Right ventricle myocardium inferior (tissue), 1 donor: ENCODE measurements at regions of chr7 and their contacts with region 1.

Region 1: GRCh38 chr7:31744294-31744874 is 57.4 kb downstream of the PPP1R17 start:
- DNase-seq: peak; percentile 74
- ATAC-seq: peak; percentile 64

Region 2: DNA sequence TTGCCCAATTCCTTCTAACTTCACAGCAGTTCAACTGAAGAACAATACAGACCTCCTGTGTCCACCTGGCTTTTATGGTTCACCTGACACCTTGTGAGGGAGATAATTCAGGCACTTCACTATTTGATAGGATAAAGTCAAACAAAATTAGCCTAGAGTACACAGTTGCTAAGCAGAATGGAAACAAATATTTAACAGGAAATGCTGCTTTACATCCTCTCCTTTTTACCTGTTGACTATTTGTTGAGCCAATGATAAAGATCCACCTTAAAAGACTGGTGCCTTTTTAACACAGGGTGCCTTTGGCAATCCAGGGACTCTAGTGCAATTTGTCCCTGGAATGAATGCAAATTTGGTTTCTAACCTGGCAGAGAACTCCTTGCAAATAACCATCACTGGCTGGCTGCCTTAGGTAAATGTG is 190.7 kb before region 1 on chr7:
- intact Hi-C with region 1: no loop called
- DNase-seq: no peak
- ATAC-seq: no peak

Region 3: GRCh38 chr7:31595390-31595789 is 149.0 kb before region 1 on chr7:
- intact Hi-C with region 1: no loop called
- DNase-seq: no peak
- ATAC-seq: no peak

Region 4: DNA sequence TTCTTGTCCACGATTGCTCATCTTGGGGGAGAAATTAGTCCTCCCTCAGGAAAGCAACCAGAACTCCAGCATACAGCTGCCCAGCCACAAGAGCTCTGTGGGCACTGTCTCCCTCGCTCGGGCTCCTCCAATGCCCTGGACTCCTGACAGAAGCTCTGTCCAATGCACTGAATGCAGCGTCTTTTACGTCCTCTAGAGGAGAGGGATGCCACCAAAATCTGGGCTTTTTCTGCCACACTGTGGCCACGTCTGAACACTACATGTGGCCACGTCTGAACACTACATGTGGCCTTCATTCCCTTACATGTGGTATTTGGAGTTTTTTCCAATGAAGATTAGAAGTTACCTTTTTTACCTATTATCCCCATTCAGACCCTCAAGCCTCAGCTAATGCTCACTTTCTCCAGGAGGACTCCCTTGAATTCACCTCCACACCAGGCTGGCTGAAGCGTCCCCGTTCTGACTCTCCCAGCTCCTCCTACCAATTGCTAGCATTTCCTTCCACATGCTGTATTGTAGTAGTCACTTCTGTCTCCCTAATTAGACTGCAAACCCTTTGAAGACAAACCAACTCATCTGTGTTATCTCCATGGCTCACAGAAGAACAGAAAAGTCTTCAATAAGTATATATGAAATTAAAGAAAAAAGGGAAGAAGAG is 460.1 kb after region 1 on chr7:
- intact Hi-C with region 1: loop called (anchors 1 kb)
- DNase-seq: peak; percentile 77
- ATAC-seq: peak; percentile 96

Region 5: GRCh38 chr7:32347244-32347828 is 603.0 kb after region 1 on chr7:
- intact Hi-C with region 1: loop called (anchors 10 kb)
- DNase-seq: no peak
- ATAC-seq: no peak

Region 6: DNA sequence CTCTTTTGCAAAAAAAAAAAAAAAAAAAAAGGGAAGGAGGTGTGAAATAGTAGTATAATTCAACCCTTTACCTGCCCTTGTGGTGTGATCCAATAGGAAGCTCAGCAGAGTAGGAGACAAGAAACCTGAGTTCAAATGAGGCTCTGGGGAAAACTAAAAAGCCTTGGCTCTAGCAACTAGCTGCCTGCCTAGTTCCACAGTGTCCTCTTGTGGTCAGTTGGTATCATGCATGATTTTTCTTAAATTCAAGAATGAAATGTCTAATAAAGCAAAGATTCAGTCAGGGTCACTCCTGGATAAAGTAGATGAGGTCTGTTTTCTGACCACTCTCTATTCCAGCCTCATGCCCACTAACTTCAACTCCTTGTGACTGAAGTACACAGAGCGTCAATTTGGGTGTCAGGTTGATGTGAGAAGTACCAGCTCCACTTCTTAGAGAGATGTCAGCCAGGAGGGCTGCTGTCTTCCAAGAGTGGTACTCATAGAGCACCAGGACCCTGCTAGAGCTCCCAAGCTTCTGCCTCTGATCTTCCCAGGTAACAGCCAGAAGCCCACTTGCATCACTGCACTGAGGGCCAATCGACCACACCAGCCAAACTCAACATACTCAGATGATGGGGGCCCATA is 735.3 kb after region 1 on chr7:
- intact Hi-C with region 1: loop called (anchors 10 kb)
- DNase-seq: no peak
- ATAC-seq: no peak